HEK293 (cell line): ENCODE measurements at regions of chr1 and their contacts with region 1.

Region 1: DNA sequence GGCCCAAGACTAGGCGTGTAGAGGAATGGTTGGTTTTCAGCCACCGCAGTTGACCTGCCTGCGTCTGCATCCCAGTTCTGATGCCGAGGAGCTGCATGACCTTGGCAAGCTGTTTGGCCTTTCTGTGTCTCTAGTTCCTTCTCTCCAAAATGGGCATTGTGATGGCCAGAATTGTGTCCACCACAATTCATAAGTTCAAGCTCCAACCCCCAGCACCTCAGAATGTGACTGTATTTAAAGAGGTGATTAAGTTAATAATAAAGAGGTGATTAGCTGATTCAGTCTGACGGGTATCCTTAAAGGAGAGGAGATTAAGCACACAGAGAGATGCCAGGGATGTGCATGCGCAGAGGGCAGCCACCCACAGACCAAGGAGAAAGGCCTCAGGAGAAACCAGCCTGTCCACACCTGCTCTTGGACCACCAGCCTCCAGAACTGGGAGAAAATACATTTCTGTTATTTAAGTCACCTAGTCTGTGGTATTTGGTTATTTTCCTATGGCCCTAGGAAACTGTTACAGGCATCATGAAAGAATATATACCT is 28.5 kb downstream of the MAB21L3 start:
- H3K4me3 ChIP-seq: no peak overlapping the region
- H3K27ac ChIP-seq: no peak overlapping the region
- H3K4me1 ChIP-seq: no peaks in the 10 kb centered on the region
- CTCF ChIP-seq: no peak

Region 2: DNA sequence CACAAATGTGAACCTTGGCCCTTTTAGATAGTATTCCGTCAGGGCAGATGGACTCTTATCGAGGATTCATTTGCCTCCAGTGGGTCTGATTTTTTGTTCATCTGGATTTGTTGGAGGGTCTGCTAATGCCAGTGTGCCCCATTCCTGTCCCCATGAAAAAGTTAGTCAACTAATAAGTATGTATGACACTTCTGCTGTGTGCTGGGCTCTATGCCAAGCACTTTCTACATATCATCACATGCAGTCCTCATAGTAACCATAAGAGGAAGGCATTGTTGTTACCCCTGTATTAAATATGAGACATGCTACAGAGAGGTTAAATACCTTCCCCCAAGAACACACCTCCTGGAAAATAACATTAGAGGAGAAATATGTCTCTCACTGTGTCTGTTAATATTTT is 75.0 kb before region 1 on chr1:
- CTCF ChIA-PET with region 1: no interaction called
- POLR2A ChIA-PET with region 1: no interaction called
- H3K4me3 ChIP-seq: no peak overlapping the region
- H3K27ac ChIP-seq: no peak overlapping the region
- H3K4me1 ChIP-seq: no peaks in the 10 kb centered on the region
- CTCF ChIP-seq: no peak

Region 3: DNA sequence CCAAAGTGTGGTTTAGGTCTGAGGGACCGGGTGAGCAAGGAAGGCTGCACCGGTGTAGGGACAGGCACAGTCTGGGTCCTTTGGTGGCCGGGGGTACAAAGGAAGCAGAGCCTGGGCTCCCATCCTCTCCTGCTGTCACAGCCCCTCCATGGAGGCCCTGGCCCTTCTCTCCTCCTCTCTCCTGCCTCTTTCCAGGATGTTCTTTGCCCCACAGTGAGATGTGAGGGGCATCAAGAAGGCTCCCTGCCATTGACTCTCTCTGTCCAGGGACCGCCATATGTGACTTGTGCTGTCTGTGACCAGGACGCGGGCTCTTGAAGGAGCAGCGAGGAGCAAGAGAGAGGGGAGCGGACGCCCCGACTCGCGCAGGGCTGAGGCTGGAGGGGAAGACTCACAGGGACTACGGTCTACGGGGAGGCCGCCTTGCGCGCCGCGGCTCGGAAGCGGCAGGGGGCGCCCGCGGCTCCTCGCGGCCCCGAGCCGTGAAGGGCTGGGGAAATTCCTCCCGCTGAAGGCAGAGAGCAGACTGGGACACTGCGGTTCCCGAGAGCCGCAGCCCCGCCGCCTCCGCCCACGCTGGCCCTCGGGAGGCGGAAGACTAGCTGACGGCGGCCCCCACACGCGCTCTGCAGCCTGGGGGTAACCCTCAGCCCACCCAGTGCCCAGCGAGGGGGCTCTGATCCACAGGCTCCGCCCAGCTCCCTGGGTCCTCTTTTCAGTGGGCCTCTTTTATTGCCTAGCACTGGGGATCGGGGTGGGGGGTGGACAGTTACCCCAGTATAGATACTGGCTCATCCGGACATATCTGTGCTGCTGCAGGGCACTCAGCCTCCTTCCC is 12.3 kb after region 1 on chr1:
- CTCF ChIA-PET with region 1: interaction called, 48 read pairs
- POLR2A ChIA-PET with region 1: no interaction called
- H3K4me3 ChIP-seq: peak overlapping the region; percentile 42
- H3K27ac ChIP-seq: no peak overlapping the region; the same call in 1 of the 2 replicates
- H3K4me1 ChIP-seq: no peaks in the 10 kb centered on the region
- CTCF ChIP-seq: peak; percentile 94

Region 4: GRCh38 chr1:116377541-116378529 is 238.2 kb after region 1 on chr1:
- CTCF ChIA-PET with region 1: interaction called, 14 read pairs
- POLR2A ChIA-PET with region 1: no interaction called
- H3K4me3 ChIP-seq: peak overlapping the region; percentile 18
- H3K27ac ChIP-seq: peak overlapping the region; percentile 28
- H3K4me1 ChIP-seq: peaks cover 43% of the 10 kb centered on the region
- CTCF ChIP-seq: no peak

Region 5: GRCh38 chr1:116439701-116440100 is 300.0 kb after region 1 on chr1:
- CTCF ChIA-PET with region 1: no interaction called
- POLR2A ChIA-PET with region 1: no interaction called
- H3K4me3 ChIP-seq: no peak overlapping the region
- H3K27ac ChIP-seq: no peak overlapping the region
- H3K4me1 ChIP-seq: no peaks in the 10 kb centered on the region
- CTCF ChIP-seq: no peak

Region 6: DNA sequence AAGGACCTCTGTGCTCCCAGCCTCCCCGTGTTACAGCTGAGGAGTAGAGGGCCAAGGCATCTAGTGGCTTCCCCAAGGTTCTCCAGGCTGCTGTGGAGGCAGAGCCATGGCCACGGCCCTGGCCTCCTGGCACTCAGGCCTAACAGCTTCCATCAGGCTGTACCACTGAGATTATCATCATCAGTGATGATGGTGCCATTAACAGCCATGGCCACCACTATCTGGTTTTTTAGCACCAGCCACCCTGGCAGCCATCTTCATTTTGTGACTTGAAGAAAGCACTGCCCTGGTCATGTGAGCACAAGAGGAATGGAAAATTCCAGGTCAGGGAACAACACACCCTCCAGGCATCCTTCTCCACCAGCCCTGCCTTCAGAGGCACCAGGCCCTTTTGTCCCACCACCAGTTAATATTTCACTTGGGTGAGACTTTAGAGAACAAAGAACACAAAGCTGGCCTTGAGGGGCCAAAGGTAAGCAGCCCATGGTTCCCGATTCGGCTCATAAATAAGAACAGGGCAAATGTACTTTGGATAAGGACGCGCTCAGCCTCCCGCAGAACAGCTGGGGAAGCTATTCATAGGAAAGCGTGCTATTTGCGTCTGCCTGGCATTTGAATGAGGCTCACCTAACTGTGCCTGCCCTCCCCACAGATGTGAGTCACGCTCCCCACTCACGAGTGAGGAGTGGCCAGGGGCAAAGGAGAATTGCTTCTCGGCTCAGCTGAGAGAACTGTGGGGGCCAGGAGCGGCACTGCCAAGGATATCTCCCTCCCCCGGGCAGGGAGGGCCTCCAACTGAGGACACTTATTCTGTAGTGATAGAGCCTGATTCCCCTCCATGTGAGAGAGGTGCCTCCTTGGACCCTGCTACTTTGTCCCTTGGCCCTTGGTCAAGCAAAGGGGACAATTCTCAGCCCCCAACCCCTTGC is 335.5 kb after region 1 on chr1:
- CTCF ChIA-PET with region 1: interaction called, 10 read pairs
- POLR2A ChIA-PET with region 1: no interaction called
- H3K4me3 ChIP-seq: no peak overlapping the region
- H3K27ac ChIP-seq: no peak overlapping the region
- H3K4me1 ChIP-seq: peaks cover 17% of the 10 kb centered on the region
- CTCF ChIP-seq: no peak

Region 7: GRCh38 chr1:116498789-116499628 is 359.3 kb after region 1 on chr1:
- CTCF ChIA-PET with region 1: interaction called, 171 read pairs
- POLR2A ChIA-PET with region 1: interaction called, 6 read pairs
- H3K4me3 ChIP-seq: no peak overlapping the region
- H3K27ac ChIP-seq: no peak overlapping the region
- H3K4me1 ChIP-seq: no peaks in the 10 kb centered on the region
- CTCF ChIP-seq: peak; percentile 85